MCF 10A (cell line): ENCODE measurements at regions of chr9 and their contacts with region 1.

Region 1: GRCh38 chr9:15416880-15417279 is 5.8 kb upstream of the SNAPC3 start:
- DNase-seq: peak; percentile 61
- H3K4me3 Mint-ChIP-seq: no peak overlapping the region
- H3K27ac Mint-ChIP-seq: no peak overlapping the region
- H3K4me1 Mint-ChIP-seq: no peaks in the 10 kb centered on the region
- H3K27me3 Mint-ChIP-seq: no peaks in the 10 kb centered on the region
- CTCF ChIP-seq: peak; percentile 56

Region 2: GRCh38 chr9:14645648-14646047 is 771.2 kb before region 1 on chr9:
- CTCF ChIA-PET with region 1: no interaction called
- POLR2A ChIA-PET with region 1: no interaction called
- intact Hi-C with region 1: no loop called
- DNase-seq: no peak
- H3K4me3 Mint-ChIP-seq: no peak overlapping the region
- H3K27ac Mint-ChIP-seq: no peak overlapping the region
- H3K4me1 Mint-ChIP-seq: no peaks in the 10 kb centered on the region
- H3K27me3 Mint-ChIP-seq: no peaks in the 10 kb centered on the region
- CTCF ChIP-seq: no peak

Region 3: GRCh38 chr9:15142878-15143534 is 273.9 kb before region 1 on chr9:
- CTCF ChIA-PET with region 1: interaction called, 3 read pairs
- POLR2A ChIA-PET with region 1: no interaction called
- intact Hi-C with region 1: loop called (anchors 2 kb)
- DNase-seq: peak; percentile 59
- H3K4me3 Mint-ChIP-seq: no peak overlapping the region
- H3K27ac Mint-ChIP-seq: no peak overlapping the region
- H3K4me1 Mint-ChIP-seq: peaks cover 15% of the 10 kb centered on the region
- H3K27me3 Mint-ChIP-seq: no peaks in the 10 kb centered on the region
- CTCF ChIP-seq: peak; percentile 66

Region 4: GRCh38 chr9:15271403-15271802 is 145.5 kb before region 1 on chr9:
- CTCF ChIA-PET with region 1: interaction called, 11 read pairs
- POLR2A ChIA-PET with region 1: interaction called, 4 read pairs
- intact Hi-C with region 1: no loop called
- DNase-seq: no peak
- H3K4me3 Mint-ChIP-seq: no peak overlapping the region
- H3K27ac Mint-ChIP-seq: no peak overlapping the region
- H3K4me1 Mint-ChIP-seq: peaks cover 5% of the 10 kb centered on the region
- H3K27me3 Mint-ChIP-seq: no peaks in the 10 kb centered on the region
- CTCF ChIP-seq: no peak

Region 5: GRCh38 chr9:15282567-15283285 is 134.2 kb before region 1 on chr9:
- CTCF ChIA-PET with region 1: interaction called, 14 read pairs
- POLR2A ChIA-PET with region 1: interaction called, 3 read pairs
- intact Hi-C with region 1: loop called (anchors 1 kb)
- DNase-seq: no peak
- H3K4me3 Mint-ChIP-seq: no peak overlapping the region
- H3K27ac Mint-ChIP-seq: no peak overlapping the region
- H3K4me1 Mint-ChIP-seq: peaks cover 11% of the 10 kb centered on the region
- H3K27me3 Mint-ChIP-seq: no peaks in the 10 kb centered on the region
- CTCF ChIP-seq: no peak